ENCODE measurements at regions of chr3 and their contacts with region 1.

Region 1: GRCh38 chr3:95200384-95200783 is 1137.5 kb downstream of the NSUN3 start:
- DNase-seq: no peak
- H3K4me3 ChIP-seq: no peak overlapping the region
- CTCF ChIP-seq: no peak
- POLR2A ChIP-seq: no peak

Region 2: DNA sequence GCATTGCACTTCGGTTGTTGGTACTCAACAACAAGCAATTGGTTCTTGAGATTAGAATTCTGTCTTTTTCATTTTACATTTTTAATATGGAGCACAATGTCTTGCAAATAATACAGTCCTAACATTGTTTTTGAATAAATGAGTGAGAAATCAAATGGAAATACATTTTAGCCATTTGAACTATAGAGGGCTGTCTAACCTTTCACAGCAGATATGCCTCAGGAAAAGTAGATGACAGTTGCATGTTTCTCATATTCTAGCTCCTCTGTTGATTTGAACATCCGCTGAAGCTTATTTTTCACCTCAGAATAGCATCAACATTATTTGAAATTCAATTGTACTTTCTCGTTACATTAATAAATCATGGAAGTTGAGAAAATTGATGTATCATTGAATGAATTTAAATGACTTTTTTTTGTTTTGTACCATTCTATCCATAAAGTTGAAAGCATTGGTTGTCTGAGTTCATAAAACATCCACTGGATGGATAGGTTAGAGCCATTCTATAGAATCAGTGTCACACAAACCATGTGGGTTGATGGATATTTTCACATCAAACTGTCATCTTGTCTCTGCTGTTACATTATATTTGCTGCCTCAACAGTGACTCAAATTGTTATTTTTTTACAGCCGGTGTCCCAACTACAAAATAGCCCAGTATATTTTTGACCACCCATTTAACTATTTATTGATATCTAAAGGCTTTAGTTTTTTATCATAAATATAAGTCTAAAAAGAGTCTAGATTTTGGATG is 209.3 kb before region 1 on chr3:
- intact Hi-C with region 1: no loop called
- DNase-seq: no peak
- H3K4me3 ChIP-seq: no peak overlapping the region
- CTCF ChIP-seq: no peak
- POLR2A ChIP-seq: no peak

Region 3: GRCh38 chr3:95002438-95003046 is 197.8 kb before region 1 on chr3:
- intact Hi-C with region 1: no loop called
- DNase-seq: no peak
- H3K4me3 ChIP-seq: no peak overlapping the region
- CTCF ChIP-seq: no peak
- POLR2A ChIP-seq: no peak

Region 4: DNA sequence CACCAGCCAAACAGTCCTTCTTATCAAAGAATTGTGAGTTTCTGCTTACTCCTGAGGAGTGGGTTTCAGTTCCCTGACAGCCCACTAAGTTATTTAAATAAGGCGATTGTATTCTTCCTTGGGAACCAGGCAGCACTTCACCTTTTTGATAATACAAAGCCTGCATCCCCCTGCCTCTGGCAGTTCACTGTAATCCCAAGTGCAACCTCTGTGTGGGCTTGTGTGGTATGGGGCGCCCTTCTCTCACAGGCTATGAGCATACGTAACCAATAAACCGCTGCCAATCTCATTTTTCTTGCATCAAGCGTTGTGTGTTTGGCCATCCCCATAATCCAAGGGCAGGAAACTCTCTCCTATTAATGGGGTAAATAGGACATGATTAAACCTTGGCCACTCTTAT is 111.9 kb before region 1 on chr3:
- intact Hi-C with region 1: no loop called
- DNase-seq: no peak
- H3K4me3 ChIP-seq: no peak overlapping the region
- CTCF ChIP-seq: no peak
- POLR2A ChIP-seq: no peak

Region 5: DNA sequence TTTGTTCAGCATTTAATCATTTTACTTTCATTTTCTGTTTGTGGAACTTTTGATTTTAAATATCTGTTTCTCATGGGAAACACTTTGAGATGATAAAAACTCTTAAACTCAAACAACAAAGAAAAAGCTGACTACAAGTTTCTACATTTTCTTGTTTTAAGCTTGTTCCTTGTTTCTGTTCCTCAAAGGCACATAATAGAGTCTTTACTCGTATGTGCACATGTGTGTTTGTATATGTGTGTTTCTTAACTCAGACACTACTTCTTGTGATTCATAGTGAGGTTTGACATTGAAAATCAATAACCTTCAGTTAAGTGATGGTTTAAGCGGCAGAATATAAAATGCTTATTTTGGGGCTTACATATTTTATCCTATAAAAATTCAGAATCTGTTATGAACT is 827.3 kb after region 1 on chr3:
- intact Hi-C with region 1: loop called (anchors 5 kb)
- DNase-seq: no peak
- H3K4me3 ChIP-seq: no peak overlapping the region
- CTCF ChIP-seq: no peak
- POLR2A ChIP-seq: no peak

Region 6: DNA sequence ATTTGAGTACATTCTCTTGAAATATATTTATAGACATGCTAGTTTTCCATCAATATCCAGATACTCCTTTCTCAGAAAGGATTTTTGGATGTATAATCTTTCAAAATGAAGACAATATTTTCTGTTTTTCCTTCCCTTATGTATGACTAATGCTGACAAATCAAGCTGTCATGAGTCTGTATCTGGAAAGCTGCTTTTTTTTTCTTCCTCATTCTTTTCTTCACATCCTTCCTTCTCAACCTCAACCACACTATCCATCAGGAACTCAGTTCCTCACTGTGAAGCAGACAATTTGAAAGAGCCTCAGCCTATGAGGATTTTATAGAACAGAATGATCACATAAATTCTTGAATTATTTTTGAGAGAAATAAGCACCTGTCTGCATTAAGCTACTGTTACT is 1278.1 kb after region 1 on chr3:
- intact Hi-C with region 1: loop called (anchors 5 kb)
- DNase-seq: no peak
- H3K4me3 ChIP-seq: no peak overlapping the region
- CTCF ChIP-seq: no peak
- POLR2A ChIP-seq: no peak